ENCODE measurements at regions of chrX and their contacts with region 1.

Region 1: GRCh38 chrX:151753313-151754041 is 18.9 kb downstream of the CNGA2 start:
- DNase-seq: peak; percentile 34 to 65 (median 53)
- ATAC-seq: peak; percentile 97
- H3K4me3 ChIP-seq: no peak overlapping the region
- H3K27ac ChIP-seq: no peak overlapping the region
- H3K4me1 ChIP-seq: no peaks in the 10 kb centered on the region
- H3K27me3 ChIP-seq: no peaks in the 10 kb centered on the region
- CTCF ChIP-seq: peak; percentile 57 to 68

Region 2: DNA sequence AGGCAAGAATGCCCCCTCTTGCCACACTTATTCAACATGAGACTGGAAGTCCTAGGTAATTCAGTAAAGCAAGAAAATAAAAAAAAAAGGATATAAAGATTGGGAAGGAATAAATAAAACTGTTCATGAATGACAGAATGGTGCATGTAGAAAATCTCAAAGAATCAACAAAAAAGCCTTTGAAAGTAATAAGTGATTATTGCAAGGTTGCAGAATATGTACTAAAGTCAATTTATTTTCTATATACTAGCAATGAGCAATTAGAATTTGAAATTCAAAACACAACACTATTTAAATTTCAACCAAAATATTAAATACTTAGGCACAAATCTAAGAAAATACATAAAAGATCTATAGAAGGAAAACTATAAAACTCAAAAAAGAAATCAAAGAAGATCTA is 326.3 kb after region 1 on chrX:
- intact Hi-C with region 1: no loop called
- DNase-seq: no peak
- ATAC-seq: no peak
- H3K4me3 ChIP-seq: no peak overlapping the region
- H3K27ac ChIP-seq: no peak overlapping the region
- H3K4me1 ChIP-seq: no peaks in the 10 kb centered on the region
- H3K27me3 ChIP-seq: no peaks in the 10 kb centered on the region
- CTCF ChIP-seq: no peak

Region 3: GRCh38 chrX:152635941-152636340 is 882.5 kb after region 1 on chrX:
- intact Hi-C with region 1: loop called in 1 of 2 experiments (anchors 5 kb)
- DNase-seq: peak in 2 of 4 donors; percentile 24 to 53
- ATAC-seq: peak; percentile 51
- H3K4me3 ChIP-seq: no peak overlapping the region
- H3K27ac ChIP-seq: no peak overlapping the region
- H3K4me1 ChIP-seq: no peaks in the 10 kb centered on the region
- H3K27me3 ChIP-seq: peaks cover 24 to 47% of the 10 kb centered on the region in 2 donors
- CTCF ChIP-seq: peak; percentile 30 to 43

Measured in left lung (tissue), 14 donors.